WTC11 (cell line): ENCODE measurements at regions of chr9 and their contacts with region 1.

Region 1: DNA sequence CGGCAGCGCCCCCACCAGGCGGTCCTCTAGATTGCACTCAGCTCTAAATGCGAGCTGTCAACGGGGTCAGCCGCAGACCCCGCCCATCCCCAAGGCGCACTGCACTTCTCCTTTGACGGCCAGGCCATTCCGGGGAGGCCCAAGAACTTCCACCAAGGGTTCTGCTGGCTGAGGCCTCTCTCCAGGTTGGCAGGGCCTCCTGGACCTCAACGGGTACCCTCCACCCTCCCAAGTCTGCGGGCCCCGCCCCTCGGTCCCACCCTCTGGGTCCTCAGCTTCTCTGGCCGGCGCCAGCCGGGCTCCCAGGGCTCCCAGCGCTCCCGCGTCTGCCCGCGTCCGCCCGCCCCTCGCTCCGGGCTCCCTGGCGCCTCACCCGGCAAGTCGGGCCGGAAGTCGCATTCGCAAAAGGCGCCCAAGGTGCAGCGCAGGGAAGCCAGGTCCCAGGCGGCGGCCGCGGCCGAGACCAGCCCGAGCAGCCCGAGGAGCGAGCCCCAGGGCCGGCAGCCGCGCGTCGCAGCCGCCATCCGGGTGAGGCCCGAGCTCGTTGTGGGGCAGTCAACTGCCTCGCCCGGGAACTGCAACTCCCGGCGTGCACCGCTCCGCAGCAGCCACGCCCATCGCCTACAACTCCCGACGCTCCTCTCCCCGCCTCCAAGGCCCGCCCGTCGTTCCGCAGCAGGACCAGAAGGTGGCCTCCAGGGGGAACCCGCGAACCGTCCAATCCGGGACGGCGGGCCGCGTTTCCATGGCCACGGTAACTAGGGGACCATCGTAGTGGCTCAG is at the start of gene TOR2A:
- DNase-seq: peak; percentile 99
- ATAC-seq: peak; percentile 90
- H3K4me3 Mint-ChIP-seq: peak within 1 kb of the TSS; percentile 72
- H3K27ac Mint-ChIP-seq: no peak within 1 kb of the TSS
- H3K4me1 Mint-ChIP-seq: peaks cover 11% of the 10 kb centered on the region
- H3K27me3 Mint-ChIP-seq: peaks cover 7% of the 10 kb centered on the region
- CTCF ChIP-seq: peak; percentile 63
- total RNA-seq, gene TOR2A: 14.4 to 19.4 TPM (median 16.6 TPM) in 3 replicates

Region 2: DNA sequence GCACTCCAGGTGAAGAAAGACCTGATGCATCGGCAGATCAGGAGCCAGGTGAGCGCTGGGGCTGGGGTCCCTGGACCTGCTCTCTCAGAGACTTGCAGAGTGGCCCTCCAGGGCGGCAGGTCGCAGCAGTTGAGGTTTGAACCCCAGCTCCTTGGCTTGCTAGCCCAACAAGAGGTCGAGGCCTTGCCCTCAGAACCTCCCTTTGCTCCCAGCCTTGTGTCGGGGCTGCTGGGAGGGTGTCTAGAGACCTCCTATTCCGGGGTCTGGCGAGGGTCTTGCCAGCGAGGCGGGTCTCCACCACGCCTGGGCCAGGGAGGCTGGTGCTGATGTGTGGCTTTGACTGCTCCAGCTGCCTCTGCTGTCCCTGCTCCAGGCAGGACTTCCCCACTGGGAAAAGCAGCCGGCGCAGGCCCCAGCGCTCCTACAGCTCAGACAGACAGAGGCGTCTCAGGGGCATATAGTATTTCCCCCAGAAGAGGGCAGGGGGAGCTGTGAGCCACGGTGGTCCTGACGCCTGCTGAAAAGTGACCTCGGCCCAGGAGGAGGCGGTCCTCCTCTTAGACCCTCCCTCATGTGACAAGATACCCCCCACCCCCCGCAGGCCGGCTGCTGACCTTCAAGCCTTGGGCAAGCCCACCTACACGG is 245.3 kb before region 1 on chr9:
- CTCF ChIA-PET with region 1: interaction called, 30 read pairs
- POLR2A ChIA-PET with region 1: no interaction called
- DNase-seq: peak; percentile 79
- ATAC-seq: peak; percentile 98
- H3K4me3 Mint-ChIP-seq: no peak overlapping the region
- H3K27ac Mint-ChIP-seq: peak overlapping the region; percentile 43; the same call in 1 of the 2 replicates
- H3K4me1 Mint-ChIP-seq: peaks cover 5% of the 10 kb centered on the region
- H3K27me3 Mint-ChIP-seq: no peaks in the 10 kb centered on the region
- CTCF ChIP-seq: no peak

Region 3: GRCh38 chr9:127578955-127579853 is 155.7 kb before region 1 on chr9:
- CTCF ChIA-PET with region 1: interaction called, 14 read pairs
- POLR2A ChIA-PET with region 1: no interaction called
- DNase-seq: peak; percentile 50
- ATAC-seq: peak; percentile 75
- H3K4me3 Mint-ChIP-seq: no peak overlapping the region
- H3K27ac Mint-ChIP-seq: 0 out of 2 replicates have a peak overlapping the region, but pooled peaks have one; percentile 48
- H3K4me1 Mint-ChIP-seq: peaks cover 16% of the 10 kb centered on the region
- H3K27me3 Mint-ChIP-seq: no peaks in the 10 kb centered on the region
- CTCF ChIP-seq: no peak

Region 4: DNA sequence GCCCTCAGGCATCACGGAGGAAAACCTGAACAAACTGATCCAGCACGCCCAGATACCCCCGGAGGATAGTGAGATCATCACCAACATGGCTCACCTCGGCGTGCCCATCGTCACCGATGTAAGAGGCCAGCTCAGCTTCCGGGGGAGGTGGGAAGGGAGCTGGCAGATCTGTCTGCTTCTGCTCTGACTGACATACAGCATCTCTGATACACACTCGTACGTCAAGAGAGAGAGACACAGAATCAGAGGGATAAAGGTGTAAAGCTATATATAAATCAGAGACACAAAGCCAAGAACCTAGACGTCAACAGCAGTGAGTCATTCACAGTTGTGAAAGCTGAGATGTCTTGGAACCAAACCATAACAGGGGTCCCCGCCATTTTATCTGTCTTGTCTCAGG is 58.3 kb before region 1 on chr9:
- CTCF ChIA-PET with region 1: interaction called, 11 read pairs
- POLR2A ChIA-PET with region 1: no interaction called
- DNase-seq: no peak
- ATAC-seq: no peak
- H3K4me3 Mint-ChIP-seq: no peak overlapping the region
- H3K27ac Mint-ChIP-seq: no peak overlapping the region
- H3K4me1 Mint-ChIP-seq: no peaks in the 10 kb centered on the region
- H3K27me3 Mint-ChIP-seq: no peaks in the 10 kb centered on the region
- CTCF ChIP-seq: no peak

Region 5: GRCh38 chr9:127754099-127755050 is 19.4 kb after region 1 on chr9:
- CTCF ChIA-PET with region 1: interaction called, 34 read pairs
- POLR2A ChIA-PET with region 1: no interaction called
- DNase-seq: peak; percentile 80
- ATAC-seq: peak; percentile 84
- H3K4me3 Mint-ChIP-seq: peak overlapping the region; percentile 68
- H3K27ac Mint-ChIP-seq: no peak overlapping the region
- H3K4me1 Mint-ChIP-seq: peaks cover 4% of the 10 kb centered on the region; the same call in 1 of the 2 replicates
- H3K27me3 Mint-ChIP-seq: peaks cover 58% of the 10 kb centered on the region
- CTCF ChIP-seq: no peak

Region 6: DNA sequence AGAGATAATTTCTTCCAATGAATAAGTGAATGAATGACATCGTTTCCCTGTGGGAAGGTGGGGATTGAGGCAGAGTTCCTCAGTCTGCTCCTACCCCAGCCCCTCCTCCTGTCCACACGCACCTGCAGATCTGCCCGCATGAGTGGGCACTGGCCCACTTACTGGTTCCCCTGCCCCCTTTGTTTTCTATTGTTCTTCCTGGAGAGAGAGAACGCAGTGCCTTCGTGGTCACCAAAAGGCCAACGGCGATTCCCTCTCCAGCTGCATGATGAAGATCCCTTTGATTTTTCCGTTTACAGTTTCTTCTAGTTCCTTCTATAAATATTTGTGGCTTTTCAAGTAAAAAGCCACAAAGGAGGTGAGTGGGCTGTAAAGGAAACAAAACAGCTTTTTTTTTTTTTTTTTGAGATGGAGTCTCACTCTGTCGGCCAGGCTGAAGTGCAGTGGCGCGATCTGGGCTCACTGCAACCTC is 62.0 kb after region 1 on chr9:
- CTCF ChIA-PET with region 1: interaction called, 13 read pairs
- POLR2A ChIA-PET with region 1: no interaction called
- DNase-seq: no peak
- ATAC-seq: no peak
- H3K4me3 Mint-ChIP-seq: no peak overlapping the region
- H3K27ac Mint-ChIP-seq: no peak overlapping the region
- H3K4me1 Mint-ChIP-seq: peaks cover 8% of the 10 kb centered on the region
- H3K27me3 Mint-ChIP-seq: no peaks in the 10 kb centered on the region
- CTCF ChIP-seq: no peak

Region 7: GRCh38 chr9:127877566-127877998 is 142.6 kb after region 1 on chr9 and contains the start of gene AK1:
- CTCF ChIA-PET with region 1: interaction called, 11 read pairs
- POLR2A ChIA-PET with region 1: no interaction called
- DNase-seq: peak; percentile 76
- ATAC-seq: peak; percentile 73
- H3K4me3 Mint-ChIP-seq: peak within 1 kb of the TSS; percentile 79
- H3K27ac Mint-ChIP-seq: no peak within 1 kb of the TSS
- H3K4me1 Mint-ChIP-seq: peaks cover 12% of the 10 kb centered on the region
- H3K27me3 Mint-ChIP-seq: no peaks in the 10 kb centered on the region
- CTCF ChIP-seq: no peak
- total RNA-seq, gene AK1: 27.5 to 34.9 TPM (median 34.4 TPM) in 3 replicates